Natural killer cell (primary cell): ENCODE measurements at regions of chr1 and their contacts with region 1.

Region 1: GRCh38 chr1:21255278-21255942 is 34.9 kb downstream of the ECE1 start:
- DNase-seq: peak; percentile 81 to 88
- ATAC-seq: peak; percentile 86 to 98 (median 95)
- H3K4me3 ChIP-seq: no peak overlapping the region
- H3K4me3 Mint-ChIP-seq: no peak overlapping the region
- H3K27ac ChIP-seq: no peak overlapping the region
- H3K27ac Mint-ChIP-seq: no peak overlapping the region
- H3K4me1 ChIP-seq: peaks cover 7% of the 10 kb centered on the region
- H3K4me1 Mint-ChIP-seq: peaks cover 4 to 13% of the 10 kb centered on the region in 2 donors
- H3K27me3 ChIP-seq: no peaks in the 10 kb centered on the region
- H3K27me3 Mint-ChIP-seq: no peaks in the 10 kb centered on the region
- CTCF ChIP-seq: peak; percentile 77

Region 2: DNA sequence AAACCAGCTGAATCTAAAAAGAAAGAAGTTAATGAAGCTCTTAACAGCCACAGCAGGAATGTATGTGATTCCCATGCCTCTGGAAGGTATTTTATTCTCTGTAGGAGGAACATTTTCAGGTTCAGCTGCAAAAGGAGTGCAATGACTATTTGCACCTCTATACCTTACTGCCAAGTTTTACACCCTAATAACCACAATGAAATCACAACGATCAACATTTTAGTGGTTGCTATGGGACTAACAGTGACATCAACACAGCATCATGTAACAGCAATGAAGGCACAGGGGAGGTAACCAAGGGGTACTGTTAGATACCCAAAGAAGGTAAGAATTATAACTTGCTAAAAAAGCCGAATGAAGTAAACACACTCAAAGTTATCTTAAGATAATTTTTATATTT is 352.0 kb before region 1 on chr1:
- intact Hi-C with region 1: no loop called
- DNase-seq: peak in 1 of 2 donors; percentile 19
- ATAC-seq: peak in 2 of 3 donors; percentile 66 to 80
- H3K4me3 ChIP-seq: no peak overlapping the region
- H3K4me3 Mint-ChIP-seq: no peak overlapping the region
- H3K27ac ChIP-seq: no peak overlapping the region
- H3K27ac Mint-ChIP-seq: peak overlapping the region; percentile 50 to 54
- H3K4me1 ChIP-seq: no peaks in the 10 kb centered on the region
- H3K4me1 Mint-ChIP-seq: peaks cover 5 to 16% of the 10 kb centered on the region in 2 donors
- H3K27me3 ChIP-seq: no peaks in the 10 kb centered on the region
- H3K27me3 Mint-ChIP-seq: no peaks in the 10 kb centered on the region
- CTCF ChIP-seq: no peak

Region 3: DNA sequence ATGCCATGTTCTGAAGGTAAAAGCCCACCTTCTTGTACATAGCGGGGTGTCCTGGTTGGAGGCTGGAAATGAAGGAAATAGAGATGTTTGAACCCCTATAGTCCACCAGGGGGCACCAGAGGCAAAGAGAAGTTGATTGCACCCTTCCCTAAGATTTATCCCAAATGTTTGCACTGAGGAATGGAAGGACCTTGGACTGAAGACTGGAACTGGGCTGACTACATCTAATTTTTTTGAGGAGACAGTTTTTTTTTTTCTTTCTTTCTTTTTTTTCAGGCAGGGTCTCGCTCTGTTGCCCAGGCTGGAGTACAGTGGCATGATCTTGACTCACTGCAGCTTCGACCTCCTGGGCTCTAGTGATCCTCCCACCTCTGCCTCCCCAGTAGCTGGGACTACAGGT is 23.4 kb before region 1 on chr1:
- intact Hi-C with region 1: loop called (anchors 1 kb)
- DNase-seq: peak in 1 of 2 donors; percentile 76
- ATAC-seq: peak; percentile 71 to 74 (median 71)
- H3K4me3 ChIP-seq: no peak overlapping the region
- H3K4me3 Mint-ChIP-seq: no peak overlapping the region
- H3K27ac ChIP-seq: no peak overlapping the region
- H3K27ac Mint-ChIP-seq: no peak overlapping the region
- H3K4me1 ChIP-seq: no peaks in the 10 kb centered on the region
- H3K4me1 Mint-ChIP-seq: no peaks in the 10 kb centered on the region
- H3K27me3 ChIP-seq: no peaks in the 10 kb centered on the region
- H3K27me3 Mint-ChIP-seq: no peaks in the 10 kb centered on the region
- CTCF ChIP-seq: peak; percentile 94

Region 4: GRCh38 chr1:21270086-21270689 is 14.8 kb after region 1 on chr1:
- intact Hi-C with region 1: no loop called
- DNase-seq: peak; percentile 69 to 88
- ATAC-seq: peak; percentile 81 to 96 (median 88)
- H3K4me3 ChIP-seq: no peak overlapping the region
- H3K4me3 Mint-ChIP-seq: no peak overlapping the region
- H3K27ac ChIP-seq: no peak overlapping the region
- H3K27ac Mint-ChIP-seq: no peak overlapping the region
- H3K4me1 ChIP-seq: no peaks in the 10 kb centered on the region
- H3K4me1 Mint-ChIP-seq: peaks cover 4 to 16% of the 10 kb centered on the region in 2 donors
- H3K27me3 ChIP-seq: no peaks in the 10 kb centered on the region
- H3K27me3 Mint-ChIP-seq: no peaks in the 10 kb centered on the region
- CTCF ChIP-seq: peak; percentile 90

Region 5: GRCh38 chr1:21368515-21369289 is 113.3 kb after region 1 on chr1:
- intact Hi-C with region 1: loop called (anchors 1 kb)
- DNase-seq: peak; percentile 63 to 83
- ATAC-seq: peak; percentile 64 to 84 (median 80)
- H3K4me3 ChIP-seq: no peak overlapping the region
- H3K4me3 Mint-ChIP-seq: no peak overlapping the region
- H3K27ac ChIP-seq: no peak overlapping the region
- H3K27ac Mint-ChIP-seq: peak overlapping the region in 1 of 2 donors; percentile 7
- H3K4me1 ChIP-seq: peaks cover 6% of the 10 kb centered on the region
- H3K4me1 Mint-ChIP-seq: peaks cover 7 to 13% of the 10 kb centered on the region in 2 donors
- H3K27me3 ChIP-seq: no peaks in the 10 kb centered on the region
- H3K27me3 Mint-ChIP-seq: peaks cover 0 to 4% of the 10 kb centered on the region in 2 donors
- CTCF ChIP-seq: peak; percentile 99

Region 6: DNA sequence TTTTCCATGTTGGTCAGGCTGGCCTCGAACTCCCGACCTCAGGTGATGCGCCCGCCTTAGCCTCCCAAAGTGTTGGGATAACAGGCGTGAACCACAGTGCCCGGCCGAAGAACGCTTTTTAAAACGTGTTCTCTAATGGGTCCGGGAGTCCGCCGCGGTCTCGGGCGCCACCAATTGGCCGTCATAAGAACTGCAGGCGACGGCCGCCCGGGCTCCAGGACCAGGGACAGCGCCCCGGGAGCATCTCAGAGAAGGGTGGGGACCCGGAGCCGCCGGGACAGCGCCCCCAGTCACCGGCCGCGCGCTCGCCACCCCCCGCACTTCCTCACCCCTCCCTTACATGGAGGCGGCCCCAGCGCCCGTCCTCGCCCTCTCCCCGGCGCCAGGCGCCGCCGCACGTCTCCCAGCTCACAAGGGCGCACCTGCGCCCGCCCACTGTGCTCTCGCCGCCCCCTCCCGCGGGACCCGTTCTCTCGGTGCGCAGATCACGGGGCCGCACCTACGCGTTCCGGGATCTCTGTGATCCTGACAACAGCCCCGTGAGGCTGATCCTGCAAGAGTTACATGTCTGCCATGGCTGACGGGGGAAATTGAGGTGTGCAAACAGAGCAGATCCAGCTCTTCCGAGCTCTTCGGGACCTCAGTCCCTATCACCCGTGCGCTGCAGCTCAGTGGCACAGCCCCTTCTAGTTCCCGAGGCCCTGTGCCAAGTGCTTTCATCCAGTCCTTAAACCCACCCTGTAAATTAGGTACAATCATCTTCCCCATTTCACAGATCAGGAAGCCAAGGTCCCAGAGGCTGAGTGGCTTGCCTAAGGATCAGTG is 403.9 kb after region 1 on chr1:
- intact Hi-C with region 1: loop called (anchors 10 kb)
- DNase-seq: peak; percentile 77 to 87
- ATAC-seq: peak; percentile 92 to 99 (median 97)
- H3K4me3 ChIP-seq: no peak overlapping the region
- H3K4me3 Mint-ChIP-seq: no peak overlapping the region
- H3K27ac ChIP-seq: no peak overlapping the region
- H3K27ac Mint-ChIP-seq: no peak overlapping the region
- H3K4me1 ChIP-seq: peaks cover 7% of the 10 kb centered on the region
- H3K4me1 Mint-ChIP-seq: peaks cover 0 to 8% of the 10 kb centered on the region in 2 donors
- H3K27me3 ChIP-seq: peaks cover 10% of the 10 kb centered on the region
- H3K27me3 Mint-ChIP-seq: peaks cover 9 to 24% of the 10 kb centered on the region in 2 donors
- CTCF ChIP-seq: peak; percentile 72